Activated naive CD4-positive, alpha-beta T cell treated with anti-CD3 and anti-CD28 coated beads for 36 hours (primary cell): ENCODE measurements at regions of chr7 and their contacts with region 1.

Region 1: DNA sequence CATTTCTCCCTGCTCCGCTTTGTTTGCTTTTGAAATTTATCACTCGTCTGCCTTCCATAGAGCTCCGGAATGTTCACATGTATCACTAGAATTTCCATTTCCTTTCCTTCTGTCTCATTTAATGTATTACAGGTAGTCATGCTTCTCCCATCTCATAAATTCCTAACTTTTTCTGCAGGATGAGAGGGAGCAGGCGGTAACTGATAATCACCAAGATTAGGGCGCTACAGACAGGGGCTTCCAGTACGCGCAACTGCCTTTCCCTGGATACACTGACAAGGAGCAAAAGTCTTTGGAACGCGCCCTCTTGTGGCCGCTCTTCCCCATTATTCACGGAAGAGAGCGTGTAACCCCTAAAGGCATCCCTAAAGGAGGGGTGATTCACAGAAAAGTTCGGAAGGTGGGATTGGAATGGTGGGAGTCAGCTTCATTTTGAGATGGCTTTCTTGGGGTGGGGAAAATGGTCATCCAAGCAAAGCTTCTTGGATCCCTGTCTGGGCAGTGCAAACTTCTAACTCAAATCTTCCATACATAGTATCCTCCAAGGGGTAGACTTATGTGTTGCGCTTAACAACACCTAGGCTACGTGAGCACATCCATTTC is 6.5 kb downstream of the INHBA start:
- DNase-seq: peak; percentile 50
- H3K4me3 Mint-ChIP-seq: no peak overlapping the region
- H3K27ac Mint-ChIP-seq: no peak overlapping the region
- H3K4me1 Mint-ChIP-seq: peaks cover 13% of the 10 kb centered on the region
- H3K27me3 Mint-ChIP-seq: peaks cover 54% of the 10 kb centered on the region

Region 2: GRCh38 chr7:40509287-40509996 is 1187.0 kb before region 1 on chr7:
- CTCF ChIA-PET with region 1: no interaction called
- intact Hi-C with region 1: loop called (anchors 2 kb)
- DNase-seq: no peak
- H3K4me3 Mint-ChIP-seq: no peak overlapping the region
- H3K27ac Mint-ChIP-seq: no peak overlapping the region
- H3K4me1 Mint-ChIP-seq: no peaks in the 10 kb centered on the region
- H3K27me3 Mint-ChIP-seq: no peaks in the 10 kb centered on the region

Region 3: GRCh38 chr7:40808378-40808942 is 888.0 kb before region 1 on chr7:
- CTCF ChIA-PET with region 1: no interaction called
- intact Hi-C with region 1: no loop called
- DNase-seq: no peak
- H3K4me3 Mint-ChIP-seq: no peak overlapping the region
- H3K27ac Mint-ChIP-seq: no peak overlapping the region
- H3K4me1 Mint-ChIP-seq: no peaks in the 10 kb centered on the region
- H3K27me3 Mint-ChIP-seq: no peaks in the 10 kb centered on the region

Region 4: GRCh38 chr7:41630741-41631140 is 65.7 kb before region 1 on chr7:
- CTCF ChIA-PET with region 1: no interaction called
- intact Hi-C with region 1: loop called (anchors 5 kb)
- DNase-seq: peak; percentile 41
- H3K4me3 Mint-ChIP-seq: no peak overlapping the region
- H3K27ac Mint-ChIP-seq: no peak overlapping the region
- H3K4me1 Mint-ChIP-seq: peaks cover 25% of the 10 kb centered on the region
- H3K27me3 Mint-ChIP-seq: peaks cover 7% of the 10 kb centered on the region

Region 5: DNA sequence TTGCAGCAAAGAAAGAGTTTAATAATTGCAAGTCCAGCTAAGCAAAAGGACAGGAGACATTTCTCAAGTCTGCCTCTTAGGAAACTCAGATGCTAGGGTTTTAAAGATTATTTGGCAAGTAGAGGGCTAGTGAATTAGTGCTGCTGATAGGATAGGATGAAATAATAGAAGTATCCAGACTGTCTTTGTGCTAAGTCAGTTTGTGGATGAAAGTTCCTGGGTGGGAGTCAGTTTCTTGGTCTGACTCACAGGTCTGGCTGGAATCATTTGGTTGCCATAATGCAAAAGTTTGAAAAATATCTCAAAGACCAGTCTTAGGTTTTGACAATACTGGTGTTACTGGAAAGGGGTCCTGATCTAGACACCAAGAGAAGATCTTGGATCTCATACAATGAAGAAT is 49.0 kb after region 1 on chr7:
- CTCF ChIA-PET with region 1: no interaction called
- intact Hi-C with region 1: no loop called
- DNase-seq: no peak
- H3K4me3 Mint-ChIP-seq: no peak overlapping the region
- H3K27ac Mint-ChIP-seq: no peak overlapping the region
- H3K4me1 Mint-ChIP-seq: no peaks in the 10 kb centered on the region
- H3K27me3 Mint-ChIP-seq: peaks cover 21% of the 10 kb centered on the region

Region 6: DNA sequence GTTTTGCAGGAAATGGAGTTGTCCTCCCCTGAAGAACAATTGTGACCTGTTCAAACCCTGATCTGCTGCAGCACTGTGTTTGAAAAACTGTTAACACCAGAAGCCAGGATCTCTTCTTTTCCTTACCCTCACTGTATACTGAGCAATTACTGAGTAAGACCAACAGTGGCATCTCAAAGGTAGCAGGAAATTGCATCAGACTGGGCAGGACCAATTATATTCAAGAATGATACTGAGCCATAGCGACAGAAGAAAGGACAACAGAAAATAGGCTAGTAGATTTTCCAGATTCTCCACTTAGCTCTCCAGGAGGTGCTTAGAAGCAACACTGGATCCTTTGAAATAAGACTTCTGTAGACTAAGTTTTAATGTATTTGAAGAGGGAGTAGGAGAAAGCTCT is 63.9 kb after region 1 on chr7:
- CTCF ChIA-PET with region 1: no interaction called
- intact Hi-C with region 1: no loop called
- DNase-seq: no peak
- H3K4me3 Mint-ChIP-seq: no peak overlapping the region
- H3K27ac Mint-ChIP-seq: no peak overlapping the region
- H3K4me1 Mint-ChIP-seq: no peaks in the 10 kb centered on the region
- H3K27me3 Mint-ChIP-seq: peaks cover 7% of the 10 kb centered on the region